ENCODE measurements at regions of chr6 and their contacts with region 1.

Region 1: GRCh38 chr6:16819752-16820151 is 58.5 kb upstream of the ATXN1 start:
- DNase-seq: peak in 1 of 2 experiments; percentile 44
- H3K4me3 ChIP-seq: no peak overlapping the region
- H3K27ac ChIP-seq: no peak overlapping the region
- H3K4me1 ChIP-seq: no peaks in the 10 kb centered on the region
- H3K27me3 ChIP-seq: no peaks in the 10 kb centered on the region
- CTCF ChIP-seq: peak; percentile 58; the same call in 1 of the 2 replicates

Region 2: GRCh38 chr6:17130786-17131185 is 311.0 kb after region 1 on chr6:
- CTCF ChIA-PET with region 1: no interaction called
- POLR2A ChIA-PET with region 1: interaction called, 11 read pairs
- intact Hi-C with region 1: no loop called
- DNase-seq: no peak
- H3K4me3 ChIP-seq: no peak overlapping the region
- H3K27ac ChIP-seq: no peak overlapping the region
- H3K4me1 ChIP-seq: no peaks in the 10 kb centered on the region
- H3K27me3 ChIP-seq: 0 out of 2 replicates have a peak, but pooled peaks cover 5% of the 10 kb centered on the region
- CTCF ChIP-seq: no peak

Measured in PC-9 (cell line).